Ascending aorta (tissue), 2 donors: ENCODE measurements at regions of chr17 and their contacts with region 1.

Region 1: GRCh38 chr17:75896415-75897159 is at the start of gene TRIM65:
- DNase-seq: peak; percentile 41 to 94
- H3K4me3 ChIP-seq: peak within 1 kb of the TSS; percentile 87 to 96
- H3K27ac ChIP-seq: peak within 1 kb of the TSS; percentile 92 to 96
- H3K4me1 ChIP-seq: peaks cover 0 to 21% of the 10 kb centered on the region in 2 donors
- H3K27me3 ChIP-seq: no peaks in the 10 kb centered on the region
- CTCF ChIP-seq: peak; percentile 56 to 64 (median 58)
- total RNA-seq, gene TRIM65: 43.3 TPM

Region 2: GRCh38 chr17:75459590-75460267 is 436.9 kb before region 1 on chr17:
- intact Hi-C with region 1: no loop called
- DNase-seq: no peak
- H3K4me3 ChIP-seq: no peak overlapping the region
- H3K27ac ChIP-seq: peak overlapping the region in 1 of 2 donors; percentile 26
- H3K4me1 ChIP-seq: peaks cover 0 to 27% of the 10 kb centered on the region in 2 donors
- H3K27me3 ChIP-seq: no peaks in the 10 kb centered on the region
- CTCF ChIP-seq: no peak

Region 3: GRCh38 chr17:75845049-75845860 is 51.3 kb before region 1 on chr17:
- intact Hi-C with region 1: loop called (anchors 1 kb)
- DNase-seq: peak; percentile 82 to 94
- H3K4me3 ChIP-seq: peak overlapping the region in 1 of 2 donors; percentile 43
- H3K27ac ChIP-seq: peak overlapping the region; percentile 93 to 94
- H3K4me1 ChIP-seq: peaks cover 9 to 24% of the 10 kb centered on the region in 2 donors
- H3K27me3 ChIP-seq: no peaks in the 10 kb centered on the region
- CTCF ChIP-seq: peak; percentile 91 to 97 (median 93)

Region 4: GRCh38 chr17:75855310-75856081 is 41.1 kb before region 1 on chr17 and contains the start of gene WBP2:
- intact Hi-C with region 1: loop called (anchors 1 kb)
- DNase-seq: peak; percentile 99 to 100
- H3K4me3 ChIP-seq: peak within 1 kb of the TSS; percentile 56 to 87
- H3K27ac ChIP-seq: peak within 1 kb of the TSS; percentile 95 to 98
- H3K4me1 ChIP-seq: peaks cover 3 to 17% of the 10 kb centered on the region in 2 donors
- H3K27me3 ChIP-seq: no peaks in the 10 kb centered on the region
- CTCF ChIP-seq: peak; percentile 63 to 84 (median 68)
- total RNA-seq, gene WBP2: 50.7 TPM

Region 5: DNA sequence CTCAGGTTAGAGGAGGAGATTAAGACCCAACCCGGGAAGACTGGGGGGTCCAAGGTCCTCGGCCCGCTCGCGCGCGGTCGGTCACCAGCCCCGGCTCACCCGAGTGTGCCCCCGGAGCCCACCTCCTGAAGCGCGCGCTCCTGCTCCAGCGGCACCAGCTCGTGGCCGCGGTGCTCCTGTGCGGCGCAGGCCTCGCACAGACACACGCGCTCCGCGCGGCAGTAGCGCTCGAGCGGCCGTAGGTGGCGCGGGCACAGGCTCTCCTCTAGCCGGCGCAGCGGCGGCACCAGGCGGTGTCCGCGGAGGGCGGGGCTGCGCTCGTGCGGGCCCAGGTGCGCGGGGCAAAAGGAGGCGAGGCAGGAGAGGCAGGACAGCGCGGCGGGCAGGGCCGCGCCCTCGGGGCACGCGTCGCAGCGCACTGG is 18.8 kb before region 1 on chr17:
- intact Hi-C with region 1: loop called (anchors 1 kb)
- DNase-seq: peak in 1 of 2 donors; percentile 86
- H3K4me3 ChIP-seq: peak overlapping the region; percentile 85 to 96
- H3K27ac ChIP-seq: peak overlapping the region; percentile 96 to 99
- H3K4me1 ChIP-seq: peaks cover 33 to 45% of the 10 kb centered on the region in 2 donors
- H3K27me3 ChIP-seq: no peaks in the 10 kb centered on the region
- CTCF ChIP-seq: peak in 2 of 3 experiments; percentile 48 to 51

Region 6: GRCh38 chr17:75959839-75960511 is 63.4 kb after region 1 on chr17:
- intact Hi-C with region 1: no loop called
- DNase-seq: no peak
- H3K4me3 ChIP-seq: no peak overlapping the region
- H3K27ac ChIP-seq: no peak overlapping the region
- H3K4me1 ChIP-seq: no peaks in the 10 kb centered on the region
- H3K27me3 ChIP-seq: no peaks in the 10 kb centered on the region
- CTCF ChIP-seq: no peak